Motor neuron (in vitro differentiated cells): ENCODE measurements at regions of chr12 and their contacts with region 1.

Region 1: GRCh38 chr12:32947206-32948067 is 50.9 kb upstream of the PKP2 start:
- ATAC-seq: peak in 7 of 8 experiments; percentile 26 to 99 (median 97)
- H3K4me3 ChIP-seq: no peak overlapping the region
- H3K27ac ChIP-seq: no peak overlapping the region
- H3K4me1 ChIP-seq: peaks cover 6 to 7% of the 10 kb centered on the region in 2 donors

Region 2: DNA sequence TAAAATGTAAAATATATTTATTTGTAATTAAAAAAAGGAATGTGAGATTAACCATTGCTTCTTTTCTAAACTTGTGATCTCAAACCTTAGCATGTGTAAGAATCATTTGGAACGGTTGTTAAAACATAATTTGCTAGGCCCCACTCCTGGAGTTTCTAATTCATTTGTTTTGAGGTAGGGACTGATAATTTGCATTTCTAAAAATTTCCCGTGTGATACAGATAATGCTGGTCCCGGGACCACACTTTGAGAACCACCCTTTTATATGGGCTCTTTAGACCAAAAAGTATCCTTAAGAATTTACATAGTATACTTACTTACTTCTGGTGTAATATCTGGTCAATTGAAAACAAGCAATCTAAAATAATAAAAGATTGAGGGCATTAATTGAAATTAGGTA is 503.0 kb after region 1 on chr12:
- in situ Hi-C with region 1: no loop called
- ATAC-seq: no peak
- H3K4me3 ChIP-seq: no peak overlapping the region
- H3K27ac ChIP-seq: no peak overlapping the region
- H3K4me1 ChIP-seq: no peaks in the 10 kb centered on the region

Region 3: GRCh38 chr12:34022079-34022830 is 1074.8 kb after region 1 on chr12 and contains the start of gene ALG10:
- in situ Hi-C with region 1: loop called in 5 of 9 experiments (anchors 25 kb)
- ATAC-seq: peak; percentile 99 to 100 (median 100)
- H3K4me3 ChIP-seq: peak within 1 kb of the TSS; percentile 56 to 85 (median 76)
- H3K27ac ChIP-seq: peak within 1 kb of the TSS; percentile 60 to 72
- H3K4me1 ChIP-seq: peaks cover 5 to 15% of the 10 kb centered on the region in 2 donors
- total RNA-seq, gene ALG10: 2.5 to 14.8 (median 10.4) TPM